ENCODE measurements at regions of chr6 and their contacts with region 1.

Region 1: DNA sequence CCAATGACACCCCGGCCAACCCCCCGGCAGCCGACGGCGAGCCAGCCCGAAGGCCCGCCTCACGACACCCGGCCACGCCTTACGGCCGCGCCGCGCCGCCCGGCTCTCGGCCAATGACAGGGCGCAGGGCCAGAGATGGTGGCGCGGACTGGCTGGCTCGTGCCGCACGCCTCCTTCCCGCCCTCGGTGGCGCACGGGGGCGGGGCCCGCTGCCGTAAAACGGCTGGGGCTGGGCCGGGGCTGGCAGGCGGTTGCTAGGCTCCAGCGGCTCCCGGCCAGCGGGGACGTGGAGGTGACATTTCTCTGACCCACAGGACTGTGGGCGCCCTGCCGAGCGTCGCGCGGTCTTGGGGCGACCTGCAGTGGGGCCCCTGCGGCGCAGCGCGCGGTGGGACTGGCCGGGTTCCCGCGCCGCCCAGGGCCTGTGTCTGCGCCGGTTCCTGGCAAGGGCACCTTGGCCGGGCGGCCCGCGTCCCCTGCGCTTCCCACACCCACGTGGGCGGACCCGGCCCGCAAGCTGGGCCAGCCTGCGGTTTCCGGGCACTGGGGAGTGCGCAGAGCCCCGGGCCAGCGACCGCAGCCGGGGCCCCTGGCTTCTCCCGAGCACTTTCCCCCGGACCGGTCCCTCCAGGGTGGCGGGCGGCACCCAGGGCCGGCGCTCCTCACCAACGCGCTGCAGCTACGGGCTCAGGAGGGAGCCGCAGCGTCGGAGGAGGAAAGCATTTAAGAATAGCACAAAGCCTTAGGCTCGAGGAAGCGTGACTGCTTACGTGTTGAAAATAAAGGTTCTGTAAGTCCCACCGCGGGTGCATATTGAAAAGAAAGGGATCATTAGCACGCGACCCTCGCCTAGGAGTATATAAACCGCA is at the start of gene MPC1:
- DNase-seq: peak; percentile 95
- ATAC-seq: peak; percentile 94
- H3K4me3 Mint-ChIP-seq: peak within 1 kb of the TSS; percentile 82
- H3K27ac Mint-ChIP-seq: peak within 1 kb of the TSS; percentile 65
- H3K4me1 Mint-ChIP-seq: peaks cover 7% of the 10 kb centered on the region
- H3K27me3 Mint-ChIP-seq: no peaks in the 10 kb centered on the region
- CTCF ChIP-seq: no peak
- total RNA-seq, gene MPC1: 17.4 to 20.3 TPM

Region 2: GRCh38 chr6:166313255-166314070 is 69.7 kb before region 1 on chr6:
- CTCF ChIA-PET with region 1: interaction called, 74 read pairs
- POLR2A ChIA-PET with region 1: no interaction called
- intact Hi-C with region 1: loop called (anchors 5 kb)
- DNase-seq: peak; percentile 76
- ATAC-seq: peak; percentile 96
- H3K4me3 Mint-ChIP-seq: no peak overlapping the region
- H3K27ac Mint-ChIP-seq: no peak overlapping the region
- H3K4me1 Mint-ChIP-seq: no peaks in the 10 kb centered on the region
- H3K27me3 Mint-ChIP-seq: peaks cover 14% of the 10 kb centered on the region
- CTCF ChIP-seq: peak; percentile 76

Region 3: DNA sequence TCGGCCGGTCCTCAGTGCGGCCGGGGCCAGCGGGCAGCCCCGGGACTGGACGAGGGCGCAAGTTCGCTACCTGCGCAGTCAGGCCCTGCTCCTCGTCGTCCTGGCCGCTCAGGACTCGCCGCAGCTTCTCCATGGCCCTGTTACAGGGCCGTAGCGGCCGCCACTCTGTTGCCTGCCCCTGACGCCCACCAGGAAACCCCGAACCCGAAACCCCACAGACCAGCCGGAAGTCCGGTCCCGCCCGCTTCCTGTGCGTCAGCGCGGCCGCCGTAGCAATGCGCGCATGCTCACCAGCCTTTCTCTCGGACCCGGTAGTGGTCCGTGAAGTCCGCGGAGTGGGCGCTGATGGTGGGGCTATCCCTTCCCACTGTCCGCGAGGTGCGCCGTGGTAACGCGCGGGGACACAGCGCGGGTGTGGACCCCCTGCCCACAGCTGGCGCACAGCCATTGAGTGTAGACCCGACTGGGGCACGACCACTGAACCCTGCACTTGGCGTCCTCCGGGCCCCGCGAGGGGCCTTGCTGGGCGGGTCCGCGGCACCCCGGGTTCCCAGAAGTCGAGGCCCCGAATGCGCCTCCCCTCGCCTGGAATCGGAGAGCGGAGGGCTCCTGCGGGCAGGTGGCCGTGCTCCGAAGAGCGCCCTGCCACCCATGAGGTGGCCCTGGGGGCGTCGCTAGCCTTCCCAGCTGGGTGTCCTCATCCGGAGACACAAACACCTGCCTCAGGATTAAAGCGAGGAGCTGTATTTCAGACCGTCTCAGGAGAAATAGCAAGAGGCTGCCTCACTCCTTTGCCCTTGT is 40.6 kb before region 1 on chr6 and contains the start of gene SFT2D1:
- CTCF ChIA-PET with region 1: interaction called, 18 read pairs
- POLR2A ChIA-PET with region 1: interaction called, 5 read pairs
- intact Hi-C with region 1: loop called (anchors 5 kb)
- DNase-seq: peak; percentile 86
- ATAC-seq: peak; percentile 83
- H3K4me3 Mint-ChIP-seq: peak within 1 kb of the TSS; percentile 90
- H3K27ac Mint-ChIP-seq: peak within 1 kb of the TSS; percentile 85
- H3K4me1 Mint-ChIP-seq: peaks cover 7% of the 10 kb centered on the region
- H3K27me3 Mint-ChIP-seq: no peaks in the 10 kb centered on the region
- CTCF ChIP-seq: no peak
- total RNA-seq, gene SFT2D1: 39.0 to 42.6 TPM

Region 4: GRCh38 chr6:166402582-166403277 is 19.6 kb after region 1 on chr6:
- CTCF ChIA-PET with region 1: interaction called, 70 read pairs
- POLR2A ChIA-PET with region 1: no interaction called
- intact Hi-C with region 1: no loop called
- DNase-seq: no peak
- ATAC-seq: no peak
- H3K4me3 Mint-ChIP-seq: no peak overlapping the region
- H3K27ac Mint-ChIP-seq: no peak overlapping the region
- H3K4me1 Mint-ChIP-seq: peaks cover 4% of the 10 kb centered on the region
- H3K27me3 Mint-ChIP-seq: no peaks in the 10 kb centered on the region
- CTCF ChIP-seq: no peak

Region 5: GRCh38 chr6:166515072-166515810 is 132.1 kb after region 1 on chr6:
- CTCF ChIA-PET with region 1: no interaction called
- POLR2A ChIA-PET with region 1: no interaction called
- intact Hi-C with region 1: no loop called
- DNase-seq: peak; percentile 83
- ATAC-seq: peak; percentile 95
- H3K4me3 Mint-ChIP-seq: no peak overlapping the region
- H3K27ac Mint-ChIP-seq: no peak overlapping the region
- H3K4me1 Mint-ChIP-seq: peaks cover 13% of the 10 kb centered on the region
- H3K27me3 Mint-ChIP-seq: no peaks in the 10 kb centered on the region
- CTCF ChIP-seq: peak; percentile 38